Activated CD4-positive, alpha-beta T cell treated with anti-CD3 and anti-CD28 coated beads, Interleukin-2, amount 10 ng/mL, durations not matched to agents 7 days and 5 days (primary cell): ENCODE measurements at regions of chr17 and their contacts with region 1.

Region 1: GRCh38 chr17:32877164-32877764 is 340 bp upstream of the MYO1D start:
- DNase-seq: peak; percentile 90
- H3K4me3 Mint-ChIP-seq: peak overlapping the region; percentile 68
- H3K27ac Mint-ChIP-seq: no peak overlapping the region
- H3K4me1 Mint-ChIP-seq: peaks cover 13% of the 10 kb centered on the region
- H3K27me3 Mint-ChIP-seq: peaks cover 29% of the 10 kb centered on the region

Region 2: DNA sequence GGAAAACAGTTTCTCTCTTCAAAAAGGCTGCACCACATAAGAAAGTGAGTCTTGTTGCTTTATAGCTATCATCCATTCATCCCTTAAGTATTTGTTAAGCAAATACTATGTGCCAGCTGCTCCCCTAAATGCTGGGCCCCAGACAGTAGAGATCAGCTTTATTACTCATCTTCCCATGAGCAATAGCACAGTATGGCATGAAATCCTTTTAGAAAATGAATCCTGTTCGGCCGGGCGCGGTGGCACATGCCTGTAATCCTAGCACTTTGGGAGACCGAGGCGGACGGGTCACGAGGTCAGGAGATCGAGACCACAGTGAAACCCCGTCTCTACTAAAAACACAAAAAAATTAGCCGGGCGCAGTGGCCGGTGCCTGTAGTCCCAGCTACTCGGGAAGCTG is 99.8 kb before region 1 on chr17:
- CTCF ChIA-PET with region 1: interaction called, 21 read pairs
- POLR2A ChIA-PET with region 1: no interaction called
- DNase-seq: no peak
- H3K4me3 Mint-ChIP-seq: no peak overlapping the region
- H3K27ac Mint-ChIP-seq: no peak overlapping the region
- H3K4me1 Mint-ChIP-seq: no peaks in the 10 kb centered on the region
- H3K27me3 Mint-ChIP-seq: no peaks in the 10 kb centered on the region

Region 3: DNA sequence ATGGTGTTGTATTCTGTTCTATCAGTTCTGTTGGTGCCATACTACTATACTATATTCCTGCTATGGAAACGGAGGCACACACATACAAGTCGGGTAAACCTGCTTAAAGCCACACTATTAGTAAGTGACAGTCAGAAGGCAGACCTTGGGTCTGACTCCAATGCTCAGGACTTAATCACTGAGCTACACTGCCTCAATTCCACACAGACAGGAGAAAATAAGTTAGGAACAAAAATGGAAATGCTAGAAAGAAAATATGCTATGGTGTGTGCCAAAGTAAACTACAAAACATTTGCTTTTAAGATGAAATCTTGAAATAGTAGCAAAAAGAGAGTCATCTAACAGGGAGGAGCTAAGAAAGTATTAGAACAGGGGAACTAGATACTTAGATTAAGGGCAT is 48.4 kb before region 1 on chr17:
- CTCF ChIA-PET with region 1: interaction called, 10 read pairs
- POLR2A ChIA-PET with region 1: no interaction called
- DNase-seq: no peak
- H3K4me3 Mint-ChIP-seq: no peak overlapping the region
- H3K27ac Mint-ChIP-seq: no peak overlapping the region
- H3K4me1 Mint-ChIP-seq: peaks cover 16% of the 10 kb centered on the region
- H3K27me3 Mint-ChIP-seq: peaks cover 19% of the 10 kb centered on the region

Region 4: GRCh38 chr17:32859857-32860525 is 17.3 kb before region 1 on chr17:
- CTCF ChIA-PET with region 1: interaction called, 56 read pairs
- POLR2A ChIA-PET with region 1: no interaction called
- DNase-seq: no peak
- H3K4me3 Mint-ChIP-seq: no peak overlapping the region
- H3K27ac Mint-ChIP-seq: no peak overlapping the region
- H3K4me1 Mint-ChIP-seq: no peaks in the 10 kb centered on the region
- H3K27me3 Mint-ChIP-seq: no peaks in the 10 kb centered on the region

Region 5: GRCh38 chr17:32903774-32904673 is 26.8 kb after region 1 on chr17:
- CTCF ChIA-PET with region 1: interaction called, 16 read pairs
- POLR2A ChIA-PET with region 1: interaction called, 3 read pairs
- DNase-seq: no peak
- H3K4me3 Mint-ChIP-seq: no peak overlapping the region
- H3K27ac Mint-ChIP-seq: no peak overlapping the region
- H3K4me1 Mint-ChIP-seq: peaks cover 13% of the 10 kb centered on the region
- H3K27me3 Mint-ChIP-seq: peaks cover 33% of the 10 kb centered on the region

Region 6: DNA sequence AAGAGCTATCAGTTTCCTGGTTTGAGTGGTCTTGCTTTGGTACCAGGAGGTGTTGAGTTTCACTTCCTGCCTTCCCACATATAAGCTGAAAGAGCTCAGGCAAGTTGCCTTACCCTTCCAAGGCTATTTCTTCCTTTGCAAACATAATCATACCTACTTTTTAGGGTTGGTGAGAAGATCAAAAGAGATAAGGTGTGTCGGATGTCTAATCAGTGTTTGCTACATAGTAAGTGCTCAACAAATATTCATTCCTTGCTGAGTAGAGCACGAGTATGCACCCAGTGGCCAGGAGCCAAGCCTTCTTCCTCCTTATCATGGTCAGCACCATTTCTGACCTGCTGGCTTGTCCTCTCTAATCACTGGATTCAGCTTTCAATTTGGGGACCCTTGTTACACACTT is 38.0 kb after region 1 on chr17:
- CTCF ChIA-PET with region 1: interaction called, 27 read pairs
- POLR2A ChIA-PET with region 1: no interaction called
- DNase-seq: no peak
- H3K4me3 Mint-ChIP-seq: no peak overlapping the region
- H3K27ac Mint-ChIP-seq: no peak overlapping the region
- H3K4me1 Mint-ChIP-seq: peaks cover 33% of the 10 kb centered on the region
- H3K27me3 Mint-ChIP-seq: peaks cover 2% of the 10 kb centered on the region